Natural killer cell (primary cell): ENCODE measurements at regions of chr11 and their contacts with region 1.

Region 1: DNA sequence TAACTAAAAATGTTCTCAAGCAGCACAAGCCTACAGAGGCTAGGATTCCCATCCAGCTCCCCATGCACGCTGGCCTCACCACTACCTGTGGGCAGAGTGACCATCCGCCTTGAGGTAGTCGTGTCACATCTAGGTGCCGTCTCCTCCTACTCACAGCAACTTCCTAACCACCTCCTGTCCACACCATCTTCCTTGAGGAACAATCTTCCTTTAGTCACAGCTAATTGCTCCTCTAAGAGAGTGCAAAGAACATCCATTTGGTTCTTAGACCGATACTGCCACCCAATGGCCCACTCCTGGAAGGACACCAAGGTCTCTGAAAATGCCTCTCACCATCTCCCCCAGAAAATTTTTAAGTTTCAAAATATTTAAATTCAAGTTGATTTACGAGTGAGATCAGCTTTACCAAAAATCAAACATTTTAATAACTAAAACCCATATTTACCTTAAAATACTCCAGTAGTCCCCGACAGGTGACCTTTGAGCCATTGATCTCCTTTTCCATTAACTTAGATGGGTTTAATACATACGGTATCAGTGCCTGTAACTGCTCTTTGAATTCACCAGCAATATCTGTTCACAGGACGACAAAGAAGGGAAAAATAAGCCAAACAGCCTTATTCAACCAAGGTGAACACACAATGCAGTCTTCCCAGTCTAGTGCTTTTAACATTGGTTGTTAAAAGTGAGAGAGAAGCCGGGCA is 21.7 kb upstream of the PLAAT3 start:
- DNase-seq: peak; percentile 59 to 86
- ATAC-seq: peak; percentile 81 to 98 (median 92)
- H3K4me3 ChIP-seq: no peak overlapping the region
- H3K4me3 Mint-ChIP-seq: no peak overlapping the region
- H3K27ac ChIP-seq: no peak overlapping the region
- H3K27ac Mint-ChIP-seq: peak overlapping the region in 1 of 2 donors; percentile 53
- H3K4me1 ChIP-seq: no peaks in the 10 kb centered on the region
- H3K4me1 Mint-ChIP-seq: peaks cover 0 to 12% of the 10 kb centered on the region in 2 donors
- H3K27me3 ChIP-seq: no peaks in the 10 kb centered on the region
- H3K27me3 Mint-ChIP-seq: no peaks in the 10 kb centered on the region
- CTCF ChIP-seq: peak; percentile 92

Region 2: GRCh38 chr11:63042596-63042995 is 593.3 kb before region 1 on chr11:
- intact Hi-C with region 1: loop called (anchors 5 kb)
- DNase-seq: no peak
- ATAC-seq: no peak
- H3K4me3 ChIP-seq: no peak overlapping the region
- H3K4me3 Mint-ChIP-seq: no peak overlapping the region
- H3K27ac ChIP-seq: no peak overlapping the region
- H3K27ac Mint-ChIP-seq: no peak overlapping the region
- H3K4me1 ChIP-seq: no peaks in the 10 kb centered on the region
- H3K4me1 Mint-ChIP-seq: no peaks in the 10 kb centered on the region
- H3K27me3 ChIP-seq: no peaks in the 10 kb centered on the region
- H3K27me3 Mint-ChIP-seq: peaks cover 28 to 44% of the 10 kb centered on the region in 2 donors
- CTCF ChIP-seq: no peak

Region 3: GRCh38 chr11:63478896-63479295 is 157.0 kb before region 1 on chr11:
- intact Hi-C with region 1: loop called (anchors 1 kb)
- DNase-seq: peak; percentile 36 to 80
- ATAC-seq: peak; percentile 82 to 89 (median 86)
- H3K4me3 ChIP-seq: no peak overlapping the region
- H3K4me3 Mint-ChIP-seq: no peak overlapping the region
- H3K27ac ChIP-seq: no peak overlapping the region
- H3K27ac Mint-ChIP-seq: no peak overlapping the region
- H3K4me1 ChIP-seq: no peaks in the 10 kb centered on the region
- H3K4me1 Mint-ChIP-seq: no peaks in the 10 kb centered on the region
- H3K27me3 ChIP-seq: no peaks in the 10 kb centered on the region
- H3K27me3 Mint-ChIP-seq: peaks cover 7 to 32% of the 10 kb centered on the region in 2 donors
- CTCF ChIP-seq: peak; percentile 97